Activated CD4-positive, alpha-beta memory T cell treated with anti-CD3 and anti-CD28 coated beads for 36 hours (primary cell): ENCODE measurements at regions of chr5 and their contacts with region 1.

Region 1: GRCh38 chr5:50767588-50767987 is 101.2 kb downstream of the PARP8 start:
- DNase-seq: no peak
- H3K4me3 Mint-ChIP-seq: no peak overlapping the region
- H3K27ac Mint-ChIP-seq: peak overlapping the region; percentile 2
- H3K4me1 Mint-ChIP-seq: peaks cover 38% of the 10 kb centered on the region
- H3K27me3 Mint-ChIP-seq: no peaks in the 10 kb centered on the region

Region 2: GRCh38 chr5:50829023-50829422 is 61.4 kb after region 1 on chr5:
- CTCF ChIA-PET with region 1: no interaction called
- POLR2A ChIA-PET with region 1: no interaction called
- intact Hi-C with region 1: loop called (anchors 5 kb)
- DNase-seq: no peak
- H3K4me3 Mint-ChIP-seq: no peak overlapping the region
- H3K27ac Mint-ChIP-seq: no peak overlapping the region
- H3K4me1 Mint-ChIP-seq: no peaks in the 10 kb centered on the region
- H3K27me3 Mint-ChIP-seq: no peaks in the 10 kb centered on the region